IMR-90 (cell line): ENCODE measurements at regions of chr11 and their contacts with region 1.

Region 1: GRCh38 chr11:111841370-111842053 is 29.9 kb downstream of the ALG9 start:
- DNase-seq: peak; percentile 88
- ATAC-seq: peak; percentile 92
- H3K4me3 ChIP-seq: no peak overlapping the region
- H3K27ac ChIP-seq: no peak overlapping the region
- H3K4me1 ChIP-seq: peaks cover 5% of the 10 kb centered on the region
- H3K27me3 ChIP-seq: no peaks in the 10 kb centered on the region
- CTCF ChIP-seq: peak; percentile 89
- POLR2A ChIP-seq: peak; percentile 37; the same call in 1 of the 2 replicates
- RAD21 ChIP-seq: peak; percentile 95

Region 2: DNA sequence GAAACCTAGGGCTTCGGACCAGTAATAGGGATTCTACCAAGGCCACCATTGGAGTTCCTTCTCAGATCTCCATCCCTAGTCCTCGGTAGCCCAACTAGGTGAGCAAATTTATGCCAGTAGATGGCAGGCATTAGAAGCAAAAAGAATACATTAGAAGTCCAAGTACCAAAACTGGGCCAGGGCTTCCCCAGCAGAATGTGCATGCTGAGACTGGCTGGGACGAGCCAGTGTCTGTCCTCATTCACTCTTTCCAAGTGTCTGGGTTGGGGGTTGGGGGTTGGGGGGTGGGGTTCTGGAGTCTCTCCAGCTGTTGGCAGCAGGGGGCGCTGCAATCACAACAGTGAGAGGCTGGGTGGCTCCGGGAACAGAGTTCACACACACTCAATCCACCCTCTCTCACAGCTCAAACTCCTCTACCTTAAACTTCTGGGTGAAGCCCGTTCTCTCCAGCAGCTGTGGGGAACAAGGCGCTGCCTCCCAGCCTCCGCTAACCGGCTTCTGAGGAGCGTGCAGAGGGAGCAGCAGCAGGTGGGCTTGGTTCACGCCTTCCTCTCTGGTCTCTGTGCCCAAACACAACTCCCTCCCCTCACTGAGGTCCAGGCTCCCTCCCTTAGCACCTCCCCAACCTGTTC is 386.8 kb before region 1 on chr11:
- CTCF ChIA-PET with region 1: no interaction called
- POLR2A ChIA-PET with region 1: no interaction called
- dilution Hi-C with region 1: no loop called
- in situ Hi-C with region 1: loop called (anchors 5 kb)
- intact Hi-C with region 1: loop called (anchors 1 kb)
- DNase-seq: peak; percentile 73
- ATAC-seq: peak; percentile 90
- H3K4me3 ChIP-seq: no peak overlapping the region
- H3K27ac ChIP-seq: peak overlapping the region; percentile 26
- H3K4me1 ChIP-seq: peaks cover 5% of the 10 kb centered on the region
- H3K27me3 ChIP-seq: peaks cover 2% of the 10 kb centered on the region; the same call in 1 of the 2 replicates
- CTCF ChIP-seq: peak; percentile 56
- POLR2A ChIP-seq: no peak
- RAD21 ChIP-seq: peak; percentile 72

Region 3: DNA sequence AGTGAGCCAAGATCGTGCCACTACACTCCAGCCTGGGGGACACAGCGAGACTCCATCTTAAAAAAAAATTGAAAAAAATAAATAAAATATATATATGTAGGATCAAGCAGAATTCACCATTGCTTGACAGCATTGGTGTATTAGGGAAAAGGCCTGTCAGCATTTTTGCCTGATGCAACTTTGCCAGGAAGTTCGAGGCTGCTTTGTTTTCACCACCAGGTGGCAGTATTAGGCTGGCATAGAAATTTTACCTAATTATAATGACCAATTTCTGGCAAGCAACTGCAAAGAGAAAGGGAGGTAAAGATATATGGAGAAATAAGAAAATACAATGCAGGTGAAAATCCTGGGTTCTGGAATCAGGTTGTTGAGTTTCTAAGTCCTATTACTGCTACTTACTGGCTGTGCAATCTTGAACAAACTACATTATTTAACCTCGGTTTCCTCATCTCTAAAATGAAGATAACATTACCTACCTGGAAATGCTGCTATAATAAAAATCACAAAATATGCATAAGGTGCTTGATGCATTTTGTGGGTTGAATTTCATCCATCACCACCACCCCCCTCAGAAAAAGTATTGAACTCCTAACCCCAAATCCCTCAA is 276.3 kb before region 1 on chr11:
- CTCF ChIA-PET with region 1: interaction called, 3 read pairs
- POLR2A ChIA-PET with region 1: no interaction called
- dilution Hi-C with region 1: no loop called
- in situ Hi-C with region 1: no loop called
- intact Hi-C with region 1: loop called (anchors 1 kb)
- DNase-seq: peak; percentile 80
- ATAC-seq: peak; percentile 11; the same call in 1 of the 2 replicates
- H3K4me3 ChIP-seq: no peak overlapping the region
- H3K27ac ChIP-seq: no peak overlapping the region
- H3K4me1 ChIP-seq: peaks cover 23% of the 10 kb centered on the region
- H3K27me3 ChIP-seq: no peaks in the 10 kb centered on the region
- CTCF ChIP-seq: peak; percentile 92
- POLR2A ChIP-seq: peak; percentile 28; the same call in 1 of the 2 replicates
- RAD21 ChIP-seq: peak; percentile 89

Region 4: GRCh38 chr11:111586388-111586831 is 255.1 kb before region 1 on chr11:
- CTCF ChIA-PET with region 1: interaction called, 4 read pairs
- POLR2A ChIA-PET with region 1: no interaction called
- dilution Hi-C with region 1: no loop called
- in situ Hi-C with region 1: loop called (anchors 5 kb)
- intact Hi-C with region 1: loop called (anchors 5 kb)
- DNase-seq: peak; percentile 66
- ATAC-seq: peak; percentile 59
- H3K4me3 ChIP-seq: no peak overlapping the region
- H3K27ac ChIP-seq: no peak overlapping the region
- H3K4me1 ChIP-seq: peaks cover 6% of the 10 kb centered on the region
- H3K27me3 ChIP-seq: 0 out of 2 replicates have a peak, but pooled peaks cover 2% of the 10 kb centered on the region
- CTCF ChIP-seq: peak; percentile 63
- POLR2A ChIP-seq: no peak
- RAD21 ChIP-seq: peak; percentile 61

Region 5: DNA sequence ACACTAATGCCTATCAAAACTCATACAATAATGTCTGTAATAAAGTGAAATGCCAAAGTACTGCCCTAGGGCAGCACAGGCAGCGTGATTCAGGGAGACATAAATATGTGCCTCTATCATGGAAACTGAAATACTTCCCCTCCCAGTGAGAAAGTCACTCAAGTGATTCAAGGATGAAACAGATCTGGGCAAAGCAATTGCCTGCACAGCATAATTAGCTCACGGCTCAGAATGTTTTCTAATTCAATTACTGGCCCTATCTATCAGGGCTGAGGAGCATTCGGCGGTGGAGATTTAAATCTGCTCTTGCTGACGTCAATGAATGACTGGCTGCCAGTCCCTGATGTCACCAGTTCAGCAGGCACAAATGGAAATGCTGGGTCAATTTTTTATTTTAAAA is 47.6 kb before region 1 on chr11:
- CTCF ChIA-PET with region 1: interaction called, 4 read pairs
- POLR2A ChIA-PET with region 1: no interaction called
- dilution Hi-C with region 1: no loop called
- in situ Hi-C with region 1: no loop called
- intact Hi-C with region 1: loop called (anchors 5 kb)
- DNase-seq: peak; percentile 47
- ATAC-seq: peak; percentile 28; the same call in 1 of the 2 replicates
- H3K4me3 ChIP-seq: no peak overlapping the region
- H3K27ac ChIP-seq: no peak overlapping the region
- H3K4me1 ChIP-seq: peaks cover 7% of the 10 kb centered on the region; the same call in 1 of the 2 replicates
- H3K27me3 ChIP-seq: no peaks in the 10 kb centered on the region
- CTCF ChIP-seq: no peak
- POLR2A ChIP-seq: no peak
- RAD21 ChIP-seq: no peak

Region 6: GRCh38 chr11:111918390-111919258 is 77.1 kb after region 1 on chr11 and contains the start of gene C11orf52:
- CTCF ChIA-PET with region 1: no interaction called
- POLR2A ChIA-PET with region 1: no interaction called
- dilution Hi-C with region 1: no loop called
- in situ Hi-C with region 1: no loop called
- intact Hi-C with region 1: no loop called
- DNase-seq: peak; percentile 57
- ATAC-seq: peak; percentile 35
- H3K4me3 ChIP-seq: peak within 1 kb of the TSS; percentile 23; the same call in 1 of the 2 replicates
- H3K27ac ChIP-seq: no peak within 1 kb of the TSS
- H3K4me1 ChIP-seq: peaks cover 16% of the 10 kb centered on the region
- H3K27me3 ChIP-seq: no peaks in the 10 kb centered on the region
- CTCF ChIP-seq: no peak
- POLR2A ChIP-seq: no peak
- RAD21 ChIP-seq: no peak
- total RNA-seq, gene C11orf52: 0.28 and 0.90 TPM in 2 replicates

Region 7: GRCh38 chr11:112042161-112042960 is 200.8 kb after region 1 on chr11:
- CTCF ChIA-PET with region 1: no interaction called
- POLR2A ChIA-PET with region 1: no interaction called
- dilution Hi-C with region 1: no loop called
- in situ Hi-C with region 1: no loop called
- intact Hi-C with region 1: no loop called
- DNase-seq: peak; percentile 26
- ATAC-seq: no peak
- H3K4me3 ChIP-seq: no peak overlapping the region
- H3K27ac ChIP-seq: no peak overlapping the region
- H3K4me1 ChIP-seq: no peaks in the 10 kb centered on the region
- H3K27me3 ChIP-seq: no peaks in the 10 kb centered on the region
- CTCF ChIP-seq: no peak
- POLR2A ChIP-seq: no peak
- RAD21 ChIP-seq: no peak